A673 (cell line): ENCODE measurements at regions of chr10 and their contacts with region 1.

Region 1: DNA sequence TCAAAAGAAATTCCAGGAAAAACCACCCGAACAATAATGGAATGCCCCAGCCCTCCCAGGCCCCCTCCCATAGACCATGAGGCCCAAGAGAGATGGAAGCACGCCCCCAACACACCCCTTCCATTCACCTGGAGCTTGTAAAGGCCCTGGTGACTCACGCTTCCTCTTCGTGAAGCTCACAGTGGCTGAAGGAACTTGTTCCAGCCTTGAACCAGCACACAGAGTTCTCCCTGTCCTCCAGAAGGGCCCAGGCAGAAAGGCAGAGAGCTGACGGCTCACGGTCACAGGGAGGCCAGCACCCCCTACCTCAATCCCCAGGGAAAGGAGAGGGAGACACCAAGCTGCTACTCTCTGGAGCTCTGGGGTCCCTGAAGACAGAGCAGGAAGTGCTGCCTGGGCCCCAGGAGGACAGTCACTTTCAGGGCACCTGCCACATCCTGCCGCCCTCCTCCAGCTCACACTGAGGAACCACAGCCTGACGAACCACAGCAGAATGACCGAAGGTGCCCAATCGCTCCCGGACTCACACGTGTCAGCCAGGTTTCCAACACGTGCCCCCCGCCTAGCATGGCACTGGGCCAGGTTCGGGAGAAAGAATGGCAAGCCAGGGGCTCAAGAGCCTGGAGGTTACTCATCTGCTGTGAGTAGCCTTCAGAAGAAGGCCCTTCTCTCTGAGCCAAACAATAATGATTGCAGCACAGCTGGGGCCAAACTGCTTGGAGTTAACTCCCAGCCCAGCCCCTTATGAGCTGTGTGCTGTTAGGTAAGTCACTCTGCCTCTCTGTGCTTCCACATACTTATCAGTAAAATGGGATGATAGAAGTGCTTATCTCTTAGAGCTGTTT is 52.8 kb downstream of the DLG5 start:
- DNase-seq: peak; percentile 39
- H3K4me3 ChIP-seq: no peak overlapping the region
- H3K27ac ChIP-seq: no peak overlapping the region
- H3K4me1 ChIP-seq: peaks cover 41% of the 10 kb centered on the region
- H3K27me3 ChIP-seq: no peaks in the 10 kb centered on the region
- CTCF ChIP-seq: no peak

Region 2: DNA sequence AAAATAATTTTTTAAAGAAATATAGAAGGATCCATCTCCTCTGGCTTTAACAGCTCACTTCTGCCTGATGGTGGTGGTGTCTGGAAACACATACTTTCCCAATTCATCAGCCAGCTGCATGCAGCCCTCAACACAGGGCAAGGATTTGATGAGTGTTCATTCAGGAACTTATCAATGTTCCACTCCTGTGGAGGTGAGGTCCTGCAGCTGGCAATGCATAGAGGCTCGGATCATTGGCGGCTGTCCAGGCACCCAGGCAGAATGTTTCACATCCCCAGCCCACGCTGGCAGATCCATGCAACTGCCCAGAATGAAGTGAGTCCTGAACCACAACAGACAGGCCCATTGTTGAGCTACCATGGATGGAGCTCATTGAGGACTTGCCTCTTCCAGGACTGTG is 181.0 kb before region 1 on chr10:
- CTCF ChIA-PET with region 1: no interaction called
- POLR2A ChIA-PET with region 1: no interaction called
- intact Hi-C with region 1: no loop called
- DNase-seq: no peak
- H3K4me3 ChIP-seq: no peak overlapping the region
- H3K27ac ChIP-seq: no peak overlapping the region
- H3K4me1 ChIP-seq: no peaks in the 10 kb centered on the region
- H3K27me3 ChIP-seq: peaks cover 9% of the 10 kb centered on the region
- CTCF ChIP-seq: no peak

Region 3: DNA sequence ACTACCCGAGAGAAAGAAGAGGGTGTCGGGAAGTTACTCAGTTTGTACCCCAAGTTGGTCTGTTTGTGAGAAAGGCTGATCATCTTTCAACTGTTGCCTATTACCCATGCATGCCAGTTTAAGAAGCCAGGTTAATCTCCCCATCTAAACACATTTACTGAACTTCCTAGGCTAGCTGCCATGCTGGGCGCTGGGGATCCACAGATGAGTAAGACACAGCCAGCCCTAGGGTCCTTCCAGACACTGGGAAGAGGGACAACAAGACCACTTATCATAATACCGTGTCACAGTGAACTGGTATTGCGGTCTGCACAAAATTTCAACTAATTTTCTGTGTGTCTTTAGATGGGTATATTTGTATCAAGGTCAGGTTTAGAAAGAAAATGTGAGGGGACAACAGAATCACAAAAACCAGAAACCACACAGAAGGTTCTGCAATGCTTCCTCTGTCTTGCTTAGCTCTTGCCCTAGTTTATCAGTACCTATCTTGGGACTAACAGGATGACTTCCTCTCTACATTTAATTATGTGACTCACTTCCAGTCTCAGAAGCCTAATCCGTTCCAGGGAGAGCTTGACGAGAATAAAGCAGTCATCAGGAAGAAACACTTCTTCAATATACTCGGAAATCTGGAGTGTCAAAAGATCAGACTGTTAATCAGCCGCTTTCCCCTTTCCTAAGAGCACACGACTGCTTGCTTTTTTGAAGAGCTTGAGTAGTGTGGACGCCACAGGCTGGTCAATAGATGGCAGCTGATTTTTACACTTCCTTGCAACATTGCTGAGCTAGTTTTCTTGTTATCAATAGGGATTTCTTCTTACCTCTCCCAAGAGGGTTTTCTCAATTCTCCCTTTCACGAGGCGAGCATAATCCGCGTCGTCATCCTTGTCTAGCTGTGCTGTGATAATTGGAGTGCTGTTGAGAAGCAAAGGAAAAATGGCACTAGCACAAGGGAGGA is 109.9 kb after region 1 on chr10:
- CTCF ChIA-PET with region 1: no interaction called
- POLR2A ChIA-PET with region 1: interaction called, 19 read pairs
- intact Hi-C with region 1: no loop called
- DNase-seq: peak; percentile 91
- H3K4me3 ChIP-seq: no peak overlapping the region
- H3K27ac ChIP-seq: peak overlapping the region; percentile 62
- H3K4me1 ChIP-seq: peaks cover 29% of the 10 kb centered on the region
- H3K27me3 ChIP-seq: no peaks in the 10 kb centered on the region
- CTCF ChIP-seq: no peak

Region 4: DNA sequence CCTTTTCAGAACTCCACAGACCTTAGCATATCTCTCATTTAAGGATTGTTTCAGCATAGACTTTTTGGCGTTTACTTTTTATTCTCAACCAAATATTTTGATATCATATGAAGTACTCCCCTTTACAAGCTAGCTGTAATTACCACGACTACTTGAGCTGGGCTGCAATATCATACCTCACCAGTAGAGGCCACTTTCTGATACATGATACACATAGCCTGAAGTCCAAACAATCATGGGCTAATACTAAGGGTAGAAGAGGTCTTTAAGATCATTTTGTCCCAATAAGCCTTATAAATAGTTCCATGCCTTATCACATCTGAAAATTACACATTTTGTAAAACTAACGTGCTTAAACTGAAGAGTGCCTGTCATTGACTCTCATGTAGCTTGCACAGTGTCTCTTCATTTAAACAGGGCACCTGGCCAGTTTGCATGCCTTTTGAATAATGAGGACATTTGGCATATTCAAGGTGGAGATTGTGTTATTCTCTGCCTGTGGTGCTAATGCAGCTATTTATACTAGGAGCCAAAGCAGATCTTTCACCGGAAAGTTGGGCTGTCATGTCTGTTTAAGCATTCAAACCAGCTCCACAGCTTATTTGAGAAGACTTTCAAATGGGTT is 791.3 kb after region 1 on chr10:
- CTCF ChIA-PET with region 1: no interaction called
- POLR2A ChIA-PET with region 1: interaction called, 10 read pairs
- intact Hi-C with region 1: no loop called
- DNase-seq: peak; percentile 24
- H3K4me3 ChIP-seq: no peak overlapping the region
- H3K27ac ChIP-seq: no peak overlapping the region
- H3K4me1 ChIP-seq: no peaks in the 10 kb centered on the region
- H3K27me3 ChIP-seq: peaks cover 11% of the 10 kb centered on the region
- CTCF ChIP-seq: peak; percentile 51